H1 (cell line): ENCODE measurements at regions of chr11 and their contacts with region 1.

Region 1: GRCh38 chr11:107549253-107549953 is 16.1 kb downstream of the ALKBH8 start:
- DNase-seq: no peak
- H3K4me3 ChIP-seq: no peak overlapping the region
- H3K27ac ChIP-seq: no peak overlapping the region
- H3K4me1 ChIP-seq: no peaks in the 10 kb centered on the region
- H3K27me3 ChIP-seq: no peaks in the 10 kb centered on the region
- CTCF ChIP-seq: peak in 2 of 3 experiments; percentile 60 to 71; a peak in 3 of 4 replicates
- EP300 ChIP-seq: no peak
- POLR2A ChIP-seq: no peak
- RAD21 ChIP-seq: peak; percentile 78 to 82

Region 2: DNA sequence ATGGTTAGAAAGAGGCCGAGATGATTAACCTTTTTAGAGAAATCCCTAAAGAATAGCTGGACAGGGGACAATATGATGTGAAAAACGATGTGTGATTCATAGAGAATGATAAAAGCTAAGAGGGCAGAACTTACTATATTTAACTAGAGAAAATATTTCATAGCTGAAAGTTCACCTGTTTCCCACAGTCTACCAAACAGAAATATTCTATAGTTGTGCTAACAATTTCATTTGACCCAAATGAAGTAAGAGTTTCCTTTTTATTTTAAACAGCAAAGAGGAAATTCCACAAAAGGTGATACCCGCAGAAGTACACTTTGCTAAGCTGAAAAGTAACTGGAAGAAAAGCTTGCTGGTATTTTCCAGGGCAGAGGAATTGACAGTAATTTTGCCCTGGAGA is 10.6 kb before region 1 on chr11:
- CTCF ChIA-PET with region 1: interaction called, 27 read pairs
- POLR2A ChIA-PET with region 1: no interaction called
- DNase-seq: no peak
- H3K4me3 ChIP-seq: no peak overlapping the region
- H3K27ac ChIP-seq: no peak overlapping the region
- H3K4me1 ChIP-seq: no peaks in the 10 kb centered on the region
- H3K27me3 ChIP-seq: no peaks in the 10 kb centered on the region
- CTCF ChIP-seq: no peak
- EP300 ChIP-seq: no peak
- POLR2A ChIP-seq: no peak
- RAD21 ChIP-seq: no peak

Region 3: DNA sequence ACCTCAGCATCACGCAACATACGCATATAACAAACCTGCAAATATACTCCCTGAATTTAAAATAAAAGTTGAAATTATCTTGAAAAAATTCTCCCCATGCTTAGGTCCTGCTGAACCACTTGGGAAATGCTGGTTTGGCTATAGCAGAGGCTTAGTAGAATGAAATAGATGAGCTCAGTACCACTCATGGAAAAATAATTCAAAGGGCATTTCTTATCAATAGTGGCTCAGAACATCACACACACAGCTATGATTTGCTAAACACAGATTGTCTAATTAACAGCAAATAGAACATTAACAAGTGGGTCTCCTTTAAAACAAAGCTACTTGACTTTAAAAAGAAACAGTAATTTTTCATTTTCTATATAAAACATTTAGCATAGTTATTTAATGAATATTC is 63.0 kb after region 1 on chr11:
- CTCF ChIA-PET with region 1: no interaction called
- POLR2A ChIA-PET with region 1: no interaction called
- DNase-seq: no peak
- H3K4me3 ChIP-seq: no peak overlapping the region
- H3K27ac ChIP-seq: no peak overlapping the region
- H3K4me1 ChIP-seq: peaks cover 0 to 3% (median 0%) of the 10 kb centered on the region in 4 experiments; a peak in 1 of 7 replicates
- H3K27me3 ChIP-seq: peaks cover 0 to 5% (median under 1%) of the 10 kb centered on the region in 4 experiments; a peak in 2 of 7 replicates
- CTCF ChIP-seq: no peak
- EP300 ChIP-seq: no peak
- POLR2A ChIP-seq: no peak
- RAD21 ChIP-seq: no peak

Region 4: GRCh38 chr11:107683807-107684206 is 134.4 kb after region 1 on chr11:
- CTCF ChIA-PET with region 1: interaction called, 66 read pairs
- POLR2A ChIA-PET with region 1: no interaction called
- DNase-seq: no peak
- H3K4me3 ChIP-seq: no peak overlapping the region
- H3K27ac ChIP-seq: no peak overlapping the region
- H3K4me1 ChIP-seq: no peaks in the 10 kb centered on the region
- H3K27me3 ChIP-seq: no peaks in the 10 kb centered on the region
- CTCF ChIP-seq: peak in 2 of 3 experiments; percentile 49 to 76; a peak in 2 of 4 replicates
- EP300 ChIP-seq: no peak
- POLR2A ChIP-seq: no peak
- RAD21 ChIP-seq: peak; percentile 42 to 44